H1 (cell line): ENCODE measurements at regions of chr3 and their contacts with region 1.

Region 1: GRCh38 chr3:132352541-132353143 is 35.4 kb downstream of the ACP3 start:
- DNase-seq: peak in 1 of 2 experiments; percentile 76
- H3K4me3 ChIP-seq: no peak overlapping the region
- H3K27ac ChIP-seq: no peak overlapping the region
- H3K4me1 ChIP-seq: peaks cover 0 to 16% (median 8%) of the 10 kb centered on the region in 4 experiments; a peak in 3 of 7 replicates
- H3K27me3 ChIP-seq: no peaks in the 10 kb centered on the region
- CTCF ChIP-seq: peak in 2 of 3 experiments; percentile 80 to 93; a peak in 3 of 4 replicates
- EP300 ChIP-seq: no peak
- POLR2A ChIP-seq: no peak
- RAD21 ChIP-seq: peak; percentile 95 to 97

Region 2: DNA sequence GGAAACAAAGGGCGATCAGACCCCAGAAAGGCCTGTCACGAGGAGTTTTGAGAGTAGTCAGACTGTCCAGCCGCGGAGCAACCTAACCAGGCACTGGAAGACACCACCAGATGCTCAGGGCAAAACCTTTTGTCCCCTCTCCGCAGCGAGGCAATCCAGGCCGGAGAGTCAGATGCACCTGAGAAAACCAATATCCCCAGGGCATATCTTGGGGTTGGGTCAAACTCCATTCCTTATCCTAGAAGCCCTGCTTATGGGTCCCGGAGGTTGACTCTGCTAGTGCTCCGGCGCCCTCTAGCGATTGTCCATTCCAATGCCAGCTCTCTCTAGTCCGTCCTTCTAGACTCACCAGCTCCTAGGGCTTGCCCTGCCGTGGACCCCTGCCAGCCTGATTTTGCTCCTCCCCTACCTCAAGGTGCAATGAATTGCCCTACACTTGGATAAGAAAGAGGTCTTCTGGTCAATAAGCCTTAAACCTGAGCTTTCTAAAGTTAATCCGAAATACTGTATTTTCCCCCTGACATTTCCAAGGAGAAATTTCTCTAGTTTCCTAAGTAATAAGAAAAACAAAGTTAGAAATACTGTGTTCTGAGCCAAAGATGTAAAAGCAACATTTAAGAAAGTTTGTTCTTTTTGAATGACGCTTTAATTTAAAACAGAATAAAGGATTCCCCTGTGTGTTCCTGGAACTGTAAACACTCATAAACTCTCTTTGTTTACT is 323.3 kb before region 1 on chr3:
- CTCF ChIA-PET with region 1: no interaction called
- POLR2A ChIA-PET with region 1: no interaction called
- DNase-seq: peak; percentile 91 to 94
- H3K4me3 ChIP-seq: no peak overlapping the region
- H3K27ac ChIP-seq: no peak overlapping the region
- H3K4me1 ChIP-seq: peaks cover 0 to 2% (median 0%) of the 10 kb centered on the region in 4 experiments; a peak in 3 of 7 replicates
- H3K27me3 ChIP-seq: peaks cover 0 to 14% (median 6%) of the 10 kb centered on the region in 4 experiments; a peak in 6 of 7 replicates
- CTCF ChIP-seq: peak; percentile 85 to 96 (median 96)
- EP300 ChIP-seq: no peak
- POLR2A ChIP-seq: no peak
- RAD21 ChIP-seq: peak; percentile 99

Region 3: DNA sequence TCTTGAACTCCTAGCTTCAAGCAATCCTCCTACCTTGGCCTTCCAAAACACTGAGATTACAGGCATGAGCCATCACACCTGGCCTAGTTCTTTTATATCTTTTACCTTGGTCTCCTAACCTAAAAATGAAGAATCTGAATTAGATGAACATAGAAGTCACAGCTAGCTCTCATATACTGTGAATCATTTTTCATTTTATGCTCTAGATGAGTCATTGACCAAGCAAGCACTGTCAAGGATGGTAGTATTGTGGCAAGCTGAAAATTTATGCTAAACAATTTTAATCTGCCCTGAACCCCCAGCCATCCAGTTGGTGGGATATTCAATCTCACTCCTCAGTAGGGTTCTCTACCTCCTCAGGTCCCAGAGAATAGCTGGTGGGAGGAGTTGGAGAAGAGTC is 16.3 kb after region 1 on chr3:
- CTCF ChIA-PET with region 1: interaction called, 23 read pairs
- POLR2A ChIA-PET with region 1: interaction called, 4 read pairs
- DNase-seq: no peak
- H3K4me3 ChIP-seq: no peak overlapping the region
- H3K27ac ChIP-seq: no peak overlapping the region
- H3K4me1 ChIP-seq: no peaks in the 10 kb centered on the region
- H3K27me3 ChIP-seq: no peaks in the 10 kb centered on the region
- CTCF ChIP-seq: no peak
- EP300 ChIP-seq: no peak
- POLR2A ChIP-seq: no peak
- RAD21 ChIP-seq: no peak

Region 4: DNA sequence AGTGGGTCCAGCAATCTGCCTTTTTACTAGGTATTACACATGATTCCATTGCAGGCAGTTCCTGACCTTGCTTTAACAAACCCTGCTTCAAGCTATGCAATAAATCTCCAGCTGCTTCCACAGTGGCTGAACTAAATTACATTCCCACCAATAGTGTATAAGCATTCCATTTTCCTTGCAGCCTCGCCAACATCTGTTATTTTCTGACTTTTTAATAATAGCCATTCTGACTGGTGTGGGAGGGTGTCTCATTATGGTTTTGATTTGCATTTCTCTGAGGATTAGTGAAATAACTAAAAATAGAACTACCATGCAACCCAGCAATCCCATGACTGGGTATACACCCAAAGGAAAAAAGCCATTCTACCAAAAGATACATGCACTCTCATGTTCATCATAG is 28.3 kb after region 1 on chr3:
- CTCF ChIA-PET with region 1: interaction called, 9 read pairs
- POLR2A ChIA-PET with region 1: interaction called, 11 read pairs
- DNase-seq: no peak
- H3K4me3 ChIP-seq: no peak overlapping the region
- H3K27ac ChIP-seq: peak overlapping the region; percentile 82; the same call in 1 of the 2 replicates
- H3K4me1 ChIP-seq: peaks cover 18 to 25% (median 21%) of the 10 kb centered on the region in 4 experiments
- H3K27me3 ChIP-seq: no peaks in the 10 kb centered on the region
- CTCF ChIP-seq: no peak
- EP300 ChIP-seq: no peak
- POLR2A ChIP-seq: no peak
- RAD21 ChIP-seq: no peak

Region 5: GRCh38 chr3:132530624-132531023 is 178.0 kb after region 1 on chr3:
- CTCF ChIA-PET with region 1: no interaction called
- POLR2A ChIA-PET with region 1: no interaction called
- DNase-seq: no peak
- H3K4me3 ChIP-seq: no peak overlapping the region
- H3K27ac ChIP-seq: no peak overlapping the region
- H3K4me1 ChIP-seq: no peaks in the 10 kb centered on the region
- H3K27me3 ChIP-seq: no peaks in the 10 kb centered on the region
- CTCF ChIP-seq: no peak
- EP300 ChIP-seq: no peak
- POLR2A ChIP-seq: no peak
- RAD21 ChIP-seq: no peak